ENCODE measurements at regions of chr5 and their contacts with region 1.

Region 1: DNA sequence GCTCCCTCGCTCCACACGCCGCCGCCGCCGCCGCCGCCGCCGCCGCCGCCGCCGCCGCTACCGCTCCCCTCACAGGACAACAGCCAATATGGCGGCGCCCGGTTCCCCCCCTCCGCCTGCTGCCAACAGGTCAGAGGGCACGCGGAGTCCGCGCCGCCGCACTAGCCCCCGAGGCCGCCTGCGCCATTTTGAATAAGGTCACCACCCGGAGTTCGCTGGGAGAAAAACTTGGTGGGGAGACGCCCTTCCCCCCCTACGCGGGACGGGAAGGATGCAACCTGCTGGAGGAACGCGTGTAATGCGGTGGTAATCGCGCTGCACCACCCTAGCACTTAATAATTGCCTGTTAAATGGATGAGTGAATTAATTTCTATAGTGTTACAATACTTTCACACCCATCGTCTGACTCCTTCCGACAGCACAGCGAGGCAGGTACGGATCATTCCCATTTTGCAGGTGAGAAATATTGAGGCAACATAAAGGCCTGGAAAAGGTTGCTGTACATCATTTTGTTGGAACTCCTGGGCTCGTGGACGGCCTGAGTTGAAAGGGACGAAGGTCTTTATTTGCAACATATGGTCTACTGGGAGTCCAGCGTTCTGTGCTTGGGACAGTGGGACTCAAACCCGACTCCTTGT is at the start of gene FAM193B:
- DNase-seq: peak; percentile 93 to 95 (median 94)
- H3K4me3 ChIP-seq: peak within 1 kb of the TSS; percentile 73
- H3K4me3 Mint-ChIP-seq: peak within 1 kb of the TSS; percentile 84 to 93 (median 90)
- H3K27ac ChIP-seq: peak within 1 kb of the TSS; percentile 67
- H3K27ac Mint-ChIP-seq: peak within 1 kb of the TSS; percentile 63 to 92 (median 82)
- H3K4me1 ChIP-seq: peaks cover 39% of the 10 kb centered on the region
- H3K4me1 Mint-ChIP-seq: peaks cover 23 to 54% (median 38%) of the 10 kb centered on the region in 4 donors
- H3K27me3 ChIP-seq: no peaks in the 10 kb centered on the region
- H3K27me3 Mint-ChIP-seq: no peaks in the 10 kb centered on the region
- total RNA-seq, gene FAM193B: 233 to 252 TPM

Region 2: DNA sequence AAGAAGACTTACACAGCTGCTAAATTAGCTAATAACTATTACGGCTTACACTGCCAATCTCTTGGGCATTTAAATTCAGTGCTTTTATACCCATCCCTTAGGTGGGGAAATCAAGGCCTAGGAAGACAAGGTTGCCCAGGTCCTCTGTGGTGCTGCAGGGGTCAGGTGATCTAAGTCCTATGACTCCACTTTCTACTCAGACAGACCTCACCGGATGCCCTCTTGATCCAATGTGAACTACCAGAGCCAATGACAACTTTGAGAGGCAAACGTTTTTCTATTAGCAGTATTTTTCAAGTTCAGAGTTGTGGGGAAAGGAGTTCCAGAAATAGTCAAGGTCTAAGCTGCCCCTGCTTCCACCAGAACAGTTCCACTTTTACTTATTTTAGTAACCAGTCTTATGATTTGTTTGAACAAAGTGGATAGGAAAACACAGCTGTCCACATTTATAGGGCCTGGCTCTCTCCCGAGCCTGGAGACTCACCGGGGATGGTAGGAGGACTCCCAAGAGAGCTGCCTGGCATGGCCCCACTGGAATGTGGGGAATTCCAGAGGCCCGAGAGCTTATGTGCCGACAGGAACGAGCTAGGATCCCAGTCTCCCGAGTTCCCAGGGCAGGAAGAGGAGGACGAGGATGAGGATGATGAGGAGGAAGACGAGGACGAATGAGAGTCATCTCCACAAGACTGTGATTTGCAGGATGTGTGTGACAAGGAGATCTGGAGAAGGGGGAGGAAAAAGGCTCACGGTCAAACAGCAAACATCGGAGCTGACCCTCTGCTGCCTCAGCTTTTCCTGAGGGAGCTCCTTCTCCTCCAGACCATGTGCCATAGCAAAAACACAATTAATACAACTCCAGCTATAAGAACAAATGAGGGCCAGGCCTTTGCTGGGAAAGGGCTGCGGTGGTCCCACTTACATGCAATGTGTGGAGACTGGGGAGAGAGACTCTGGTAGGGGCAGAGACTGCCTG is 16.9 kb before region 1 on chr5:
- CTCF ChIA-PET with region 1: no interaction called
- POLR2A ChIA-PET with region 1: no interaction called
- intact Hi-C with region 1: no loop called
- DNase-seq: no peak
- H3K4me3 ChIP-seq: no peak overlapping the region
- H3K4me3 Mint-ChIP-seq: no peak overlapping the region
- H3K27ac ChIP-seq: no peak overlapping the region
- H3K27ac Mint-ChIP-seq: peak overlapping the region in 4 of 7 donors; percentile 29 to 88 (median 52)
- H3K4me1 ChIP-seq: no peaks in the 10 kb centered on the region
- H3K4me1 Mint-ChIP-seq: peaks cover 0 to 12% (median 4%) of the 10 kb centered on the region in 4 donors
- H3K27me3 ChIP-seq: no peaks in the 10 kb centered on the region
- H3K27me3 Mint-ChIP-seq: no peaks in the 10 kb centered on the region

Region 3: DNA sequence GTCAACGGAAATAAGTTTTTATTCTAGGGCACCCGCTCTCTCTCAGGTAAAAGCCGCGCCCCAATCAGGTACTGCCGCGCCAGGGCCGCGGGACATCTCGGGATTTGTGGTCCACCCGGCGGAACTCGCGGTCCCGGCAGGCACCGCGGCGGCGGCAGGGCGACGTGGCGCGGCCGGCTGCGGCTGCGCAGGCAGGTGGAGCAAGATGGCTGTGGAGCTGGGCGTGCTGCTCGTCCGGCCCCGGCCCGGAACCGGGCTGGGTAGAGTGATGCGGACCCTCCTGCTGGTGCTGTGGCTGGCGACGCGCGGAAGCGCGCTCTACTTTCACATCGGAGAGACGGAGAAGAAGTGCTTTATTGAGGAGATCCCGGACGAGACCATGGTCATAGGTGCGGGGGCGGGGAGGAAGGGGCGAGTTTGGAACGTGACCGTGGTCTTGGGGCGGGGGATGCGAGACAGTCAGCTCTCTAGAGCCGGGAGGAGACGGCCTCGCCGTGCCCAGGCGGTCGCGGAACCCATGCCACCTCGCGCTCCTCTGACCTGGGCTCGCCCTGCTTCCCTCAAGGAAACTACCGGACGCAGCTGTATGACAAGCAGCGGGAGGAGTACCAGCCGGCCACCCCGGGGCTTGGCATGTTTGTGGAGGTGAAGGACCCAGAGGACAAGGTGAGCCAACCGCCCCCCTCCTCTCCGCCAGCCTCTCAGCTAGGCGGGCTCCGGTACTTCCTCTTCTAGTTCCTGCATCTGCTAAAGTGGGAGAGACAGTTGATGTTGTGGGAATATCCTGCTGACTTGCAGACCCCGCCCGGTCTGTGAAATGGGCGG is 37.6 kb after region 1 on chr5 and contains the start of gene TMED9:
- CTCF ChIA-PET with region 1: no interaction called
- POLR2A ChIA-PET with region 1: interaction called, 7 read pairs
- intact Hi-C with region 1: loop called (anchors 1 kb)
- DNase-seq: peak; percentile 88 to 91 (median 90)
- H3K4me3 ChIP-seq: peak within 1 kb of the TSS; percentile 97 to 98
- H3K4me3 Mint-ChIP-seq: peak within 1 kb of the TSS; percentile 96 to 100 (median 99)
- H3K27ac ChIP-seq: peak within 1 kb of the TSS; percentile 74
- H3K27ac Mint-ChIP-seq: peak within 1 kb of the TSS; percentile 91 to 99 (median 98)
- H3K4me1 ChIP-seq: peaks cover 26% of the 10 kb centered on the region
- H3K4me1 Mint-ChIP-seq: peaks cover 15 to 37% (median 26%) of the 10 kb centered on the region in 4 donors
- H3K27me3 ChIP-seq: no peaks in the 10 kb centered on the region
- H3K27me3 Mint-ChIP-seq: peaks cover 13 to 14% of the 10 kb centered on the region in 2 donors
- total RNA-seq, gene TMED9: 93.7 to 95.8 TPM

Region 4: GRCh38 chr5:177599731-177600507 is 45.3 kb after region 1 on chr5 and contains the start of gene B4GALT7:
- CTCF ChIA-PET with region 1: no interaction called
- POLR2A ChIA-PET with region 1: interaction called, 3 read pairs
- intact Hi-C with region 1: loop called (anchors 1 kb)
- DNase-seq: peak; percentile 72 to 85 (median 83)
- H3K4me3 ChIP-seq: peak within 1 kb of the TSS; percentile 79 to 87
- H3K4me3 Mint-ChIP-seq: peak within 1 kb of the TSS; percentile 92 to 99 (median 94)
- H3K27ac ChIP-seq: peak within 1 kb of the TSS; percentile 63
- H3K27ac Mint-ChIP-seq: peak within 1 kb of the TSS; percentile 85 to 99 (median 94)
- H3K4me1 ChIP-seq: peaks cover 29% of the 10 kb centered on the region
- H3K4me1 Mint-ChIP-seq: peaks cover 17 to 46% (median 34%) of the 10 kb centered on the region in 4 donors
- H3K27me3 ChIP-seq: no peaks in the 10 kb centered on the region
- H3K27me3 Mint-ChIP-seq: no peaks in the 10 kb centered on the region
- total RNA-seq, gene B4GALT7: 45.3 to 47.9 TPM

Region 5: DNA sequence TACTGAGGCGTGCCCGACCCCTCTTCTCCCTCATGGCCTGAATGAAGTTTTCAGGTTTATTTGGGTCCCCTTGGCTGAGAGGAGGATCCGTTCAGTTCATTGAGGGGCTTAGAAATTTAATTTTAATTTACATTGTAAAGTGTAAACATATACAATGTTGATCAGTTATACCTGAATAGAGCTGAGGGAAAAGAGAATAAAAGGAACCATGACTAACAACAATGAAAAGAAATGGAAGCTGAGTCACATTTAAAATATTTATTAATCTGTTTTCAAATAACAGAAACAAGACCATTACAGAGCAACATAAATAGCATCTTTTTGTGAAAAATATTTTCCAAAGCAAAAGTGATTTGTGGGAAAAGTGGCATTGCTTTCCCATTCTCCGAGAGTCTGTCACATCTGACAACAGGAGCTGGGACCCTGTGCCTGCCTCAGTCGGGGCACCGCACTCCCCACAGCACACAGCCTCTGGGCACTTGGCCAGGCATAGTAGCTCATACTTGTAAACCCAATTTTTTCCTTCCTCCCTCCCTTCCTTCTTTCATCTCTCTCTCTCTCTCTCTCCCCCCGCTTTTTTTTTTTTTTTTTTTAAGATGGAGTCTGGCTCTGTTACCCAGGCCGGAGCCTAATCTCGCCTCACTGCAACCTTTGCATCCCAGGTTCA is 412.8 kb after region 1 on chr5:
- CTCF ChIA-PET with region 1: no interaction called
- POLR2A ChIA-PET with region 1: no interaction called
- intact Hi-C with region 1: no loop called
- DNase-seq: no peak
- H3K4me3 ChIP-seq: no peak overlapping the region
- H3K4me3 Mint-ChIP-seq: no peak overlapping the region
- H3K27ac ChIP-seq: no peak overlapping the region
- H3K27ac Mint-ChIP-seq: no peak overlapping the region
- H3K4me1 ChIP-seq: no peaks in the 10 kb centered on the region
- H3K4me1 Mint-ChIP-seq: peaks cover 0 to 7% (median 5%) of the 10 kb centered on the region in 4 donors
- H3K27me3 ChIP-seq: no peaks in the 10 kb centered on the region
- H3K27me3 Mint-ChIP-seq: no peaks in the 10 kb centered on the region

Region 6: DNA sequence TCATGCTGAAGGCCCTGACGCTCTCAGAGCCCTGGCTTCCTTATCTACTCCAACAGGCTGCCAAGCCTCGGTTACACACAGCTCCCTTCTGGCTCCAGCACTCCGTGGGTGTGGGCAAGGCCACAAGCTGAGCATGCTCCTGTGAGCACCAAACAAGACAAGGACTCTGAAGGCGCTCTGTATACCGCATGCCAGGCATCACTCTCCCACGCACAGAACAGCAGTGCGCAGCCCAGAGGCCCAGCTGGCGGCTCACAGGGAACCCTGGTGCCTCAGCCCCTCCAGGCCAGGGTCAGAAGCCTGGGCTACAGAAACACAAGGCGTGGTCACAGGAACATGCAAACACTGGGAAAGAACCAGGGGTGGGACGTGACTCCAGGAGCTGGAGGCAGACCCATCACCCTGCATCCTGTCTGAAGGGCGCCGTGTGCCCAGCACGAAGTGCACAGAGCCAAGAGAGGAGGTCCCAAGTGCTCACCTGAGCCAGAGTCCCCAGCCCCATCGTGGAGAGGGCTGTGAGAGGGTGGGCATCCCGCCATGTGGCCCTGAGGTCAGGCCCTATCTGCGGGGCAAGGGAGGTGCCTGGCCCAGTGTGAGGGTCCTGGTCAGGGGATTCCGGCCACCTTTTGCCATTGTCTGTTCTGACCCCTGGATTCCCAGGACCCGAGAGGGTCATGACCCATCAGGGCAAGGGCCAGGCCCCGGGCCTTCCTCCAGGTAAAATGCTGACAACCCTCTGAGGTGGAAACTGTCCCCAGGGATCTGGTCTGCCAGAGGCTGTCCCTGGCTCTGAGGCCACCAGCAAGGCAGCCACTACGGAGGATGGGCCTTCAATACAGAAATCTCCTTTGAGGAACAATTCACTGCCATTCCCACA is 980.9 kb after region 1 on chr5:
- CTCF ChIA-PET with region 1: no interaction called
- POLR2A ChIA-PET with region 1: no interaction called
- intact Hi-C with region 1: no loop called
- DNase-seq: no peak
- H3K4me3 ChIP-seq: no peak overlapping the region
- H3K4me3 Mint-ChIP-seq: no peak overlapping the region
- H3K27ac ChIP-seq: no peak overlapping the region
- H3K27ac Mint-ChIP-seq: no peak overlapping the region
- H3K4me1 ChIP-seq: no peaks in the 10 kb centered on the region
- H3K4me1 Mint-ChIP-seq: no peaks in the 10 kb centered on the region
- H3K27me3 ChIP-seq: no peaks in the 10 kb centered on the region
- H3K27me3 Mint-ChIP-seq: peaks cover 0 to 5% of the 10 kb centered on the region in 2 donors

Measured in CD4-positive, alpha-beta memory T cell (primary cell).